ENCODE measurements at regions of chr11 and their contacts with region 1.

Region 1: GRCh38 chr11:129117595-129118350 is 74.4 kb downstream of the ARHGAP32 start:
- DNase-seq: peak; percentile 70 to 83
- H3K4me3 ChIP-seq: no peak overlapping the region
- H3K4me3 Mint-ChIP-seq: no peak overlapping the region
- H3K27ac Mint-ChIP-seq: no peak overlapping the region
- H3K4me1 ChIP-seq: peaks cover 33% of the 10 kb centered on the region
- H3K4me1 Mint-ChIP-seq: peaks cover 22% of the 10 kb centered on the region
- H3K27me3 ChIP-seq: no peaks in the 10 kb centered on the region
- H3K27me3 Mint-ChIP-seq: no peaks in the 10 kb centered on the region
- CTCF ChIP-seq: peak; percentile 97 to 98

Region 2: GRCh38 chr11:128884703-128885338 is 233.0 kb before region 1 on chr11:
- CTCF ChIA-PET with region 1: no interaction called
- POLR2A ChIA-PET with region 1: no interaction called
- intact Hi-C with region 1: loop called (anchors 2 kb)
- DNase-seq: peak; percentile 78 to 91
- H3K4me3 ChIP-seq: no peak overlapping the region
- H3K4me3 Mint-ChIP-seq: no peak overlapping the region
- H3K27ac Mint-ChIP-seq: no peak overlapping the region
- H3K4me1 ChIP-seq: no peaks in the 10 kb centered on the region; the same call in 1 of the 2 replicates
- H3K4me1 Mint-ChIP-seq: no peaks in the 10 kb centered on the region
- H3K27me3 ChIP-seq: no peaks in the 10 kb centered on the region; the same call in none of the 2 replicates
- H3K27me3 Mint-ChIP-seq: peaks cover 33% of the 10 kb centered on the region
- CTCF ChIP-seq: peak; percentile 96 to 97

Region 3: DNA sequence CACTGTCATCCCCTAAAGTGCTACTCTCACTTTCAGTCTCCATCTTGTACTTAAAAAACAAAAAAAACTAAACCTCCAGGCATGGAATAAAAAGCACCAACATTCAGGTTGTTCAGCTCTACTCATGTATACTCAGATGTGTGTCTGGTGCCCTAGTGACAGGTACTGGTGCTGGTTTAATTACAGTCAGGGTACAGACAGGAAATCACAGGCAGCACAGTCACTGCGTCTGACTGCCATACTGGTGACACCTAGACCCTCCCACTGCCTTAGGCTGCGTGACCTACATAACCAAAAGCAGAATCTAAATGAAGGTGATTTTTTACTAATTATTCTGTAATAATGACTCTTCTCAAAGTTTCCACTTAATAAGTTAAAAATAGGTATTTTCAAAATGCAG is 74.4 kb after region 1 on chr11 and contains the start of gene ARHGAP32:
- CTCF ChIA-PET with region 1: no interaction called
- POLR2A ChIA-PET with region 1: no interaction called
- intact Hi-C with region 1: loop called (anchors 5 kb)
- DNase-seq: no peak
- H3K4me3 ChIP-seq: no peak within 1 kb of the TSS
- H3K4me3 Mint-ChIP-seq: no peak within 1 kb of the TSS
- H3K27ac Mint-ChIP-seq: no peak within 1 kb of the TSS
- H3K4me1 ChIP-seq: peaks cover 26% of the 10 kb centered on the region
- H3K4me1 Mint-ChIP-seq: peaks cover 6% of the 10 kb centered on the region
- H3K27me3 ChIP-seq: no peaks in the 10 kb centered on the region
- H3K27me3 Mint-ChIP-seq: no peaks in the 10 kb centered on the region
- CTCF ChIP-seq: no peak
- total RNA-seq, gene ARHGAP32: 54.0 and 56.0 TPM in 2 replicates

Region 4: DNA sequence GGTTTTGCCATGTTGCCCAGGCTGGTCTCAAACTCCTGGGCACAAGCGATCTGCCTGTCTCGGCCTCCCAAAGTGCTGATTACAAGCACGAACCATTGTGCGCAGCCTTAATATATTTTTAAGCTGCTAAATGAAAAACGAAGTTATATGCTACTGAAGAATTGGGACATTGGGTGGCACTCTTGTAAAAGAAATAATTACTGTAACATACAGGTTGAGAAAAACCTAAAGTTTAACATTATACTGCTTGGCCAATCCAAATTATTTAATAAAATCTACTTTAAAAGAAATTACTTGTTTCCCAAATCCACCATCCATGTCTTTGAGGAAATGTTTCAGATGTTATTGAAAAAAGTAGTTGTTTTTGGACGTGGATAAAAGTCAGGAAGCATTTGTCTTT is 112.2 kb after region 1 on chr11:
- CTCF ChIA-PET with region 1: no interaction called
- POLR2A ChIA-PET with region 1: no interaction called
- intact Hi-C with region 1: loop called (anchors 5 kb)
- DNase-seq: no peak
- H3K4me3 ChIP-seq: no peak overlapping the region
- H3K4me3 Mint-ChIP-seq: no peak overlapping the region
- H3K27ac Mint-ChIP-seq: no peak overlapping the region
- H3K4me1 ChIP-seq: peaks cover 3% of the 10 kb centered on the region
- H3K4me1 Mint-ChIP-seq: peaks cover 2% of the 10 kb centered on the region
- H3K27me3 ChIP-seq: no peaks in the 10 kb centered on the region
- H3K27me3 Mint-ChIP-seq: no peaks in the 10 kb centered on the region
- CTCF ChIP-seq: no peak

Region 5: DNA sequence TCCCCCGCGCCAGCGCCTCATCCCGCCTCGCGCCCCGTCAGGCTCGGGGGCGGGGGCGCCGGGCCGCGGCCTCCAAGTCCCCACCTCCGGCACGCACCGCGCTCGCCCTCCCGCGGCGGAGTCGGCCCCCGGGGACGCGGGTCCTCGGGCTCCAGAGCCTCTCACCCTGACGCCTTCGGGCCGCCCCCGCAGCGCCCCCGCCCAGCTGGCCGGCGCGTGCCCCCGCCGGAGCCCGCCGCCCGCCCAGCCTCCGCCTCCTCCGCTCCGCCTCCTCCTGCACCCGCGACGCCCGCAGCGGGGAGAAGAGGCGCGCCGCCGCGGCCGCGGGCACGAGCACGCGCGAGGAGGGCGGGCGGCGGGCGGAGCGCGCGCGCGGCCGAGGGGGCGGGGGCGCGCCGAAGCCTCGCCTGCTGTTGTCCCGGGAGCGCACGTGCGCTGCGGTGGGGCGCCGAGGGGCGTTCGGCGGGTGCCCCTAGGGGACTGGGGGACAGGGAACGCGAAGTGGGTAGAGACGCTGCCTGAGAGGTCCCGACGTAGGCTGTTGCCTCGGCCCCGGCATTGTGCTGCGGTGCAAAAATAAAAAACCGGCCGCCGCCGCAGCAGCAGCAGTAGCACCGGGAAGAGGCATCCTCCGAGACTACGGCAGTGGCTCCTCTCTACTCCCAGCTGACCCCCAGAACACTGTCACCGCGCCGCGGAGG is 161.7 kb after region 1 on chr11:
- CTCF ChIA-PET with region 1: interaction called, 4 read pairs
- POLR2A ChIA-PET with region 1: no interaction called
- intact Hi-C with region 1: loop called (anchors 1 kb)
- DNase-seq: peak; percentile 94 to 98
- H3K4me3 ChIP-seq: peak overlapping the region; percentile 84
- H3K4me3 Mint-ChIP-seq: peak overlapping the region; percentile 90
- H3K27ac Mint-ChIP-seq: peak overlapping the region; percentile 84
- H3K4me1 ChIP-seq: peaks cover 79% of the 10 kb centered on the region
- H3K4me1 Mint-ChIP-seq: peaks cover 60% of the 10 kb centered on the region
- H3K27me3 ChIP-seq: no peaks in the 10 kb centered on the region
- H3K27me3 Mint-ChIP-seq: no peaks in the 10 kb centered on the region
- CTCF ChIP-seq: peak in 1 of 2 experiments; percentile 38

Region 6: DNA sequence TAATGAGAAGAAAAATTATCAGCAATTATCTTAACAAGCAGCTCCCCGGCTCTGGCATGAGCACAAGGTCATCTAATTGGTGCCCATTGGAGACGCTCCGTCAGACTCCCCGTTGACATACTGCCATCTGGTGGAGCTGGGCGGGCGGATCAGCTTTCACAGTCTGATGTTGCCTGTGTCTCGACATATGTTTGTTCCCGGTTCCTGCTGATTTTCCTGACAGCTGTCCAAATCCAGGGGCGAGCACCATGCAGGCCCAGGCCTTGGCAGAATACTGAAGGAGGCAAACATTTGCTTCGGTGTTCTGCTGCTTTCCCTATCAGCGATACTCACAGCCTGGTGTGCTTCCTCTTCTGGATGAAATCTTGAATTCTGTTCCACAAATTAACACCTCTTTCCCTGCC is 214.1 kb after region 1 on chr11:
- CTCF ChIA-PET with region 1: interaction called, 14 read pairs
- POLR2A ChIA-PET with region 1: no interaction called
- intact Hi-C with region 1: loop called (anchors 1 kb)
- DNase-seq: peak; percentile 93 to 95
- H3K4me3 ChIP-seq: no peak overlapping the region
- H3K4me3 Mint-ChIP-seq: no peak overlapping the region
- H3K27ac Mint-ChIP-seq: peak overlapping the region; percentile 6
- H3K4me1 ChIP-seq: 0 out of 2 replicates have a peak, but pooled peaks cover 3% of the 10 kb centered on the region
- H3K4me1 Mint-ChIP-seq: peaks cover 12% of the 10 kb centered on the region
- H3K27me3 ChIP-seq: no peaks in the 10 kb centered on the region
- H3K27me3 Mint-ChIP-seq: no peaks in the 10 kb centered on the region
- CTCF ChIP-seq: peak; percentile 99

Region 7: GRCh38 chr11:129750349-129751292 is 632.8 kb after region 1 on chr11:
- CTCF ChIA-PET with region 1: no interaction called
- POLR2A ChIA-PET with region 1: no interaction called
- intact Hi-C with region 1: loop called (anchors 2 kb)
- DNase-seq: peak; percentile 80 to 93
- H3K4me3 ChIP-seq: peak overlapping the region; percentile 18; the same call in 1 of the 2 replicates
- H3K4me3 Mint-ChIP-seq: peak overlapping the region; percentile 50
- H3K27ac Mint-ChIP-seq: no peak overlapping the region
- H3K4me1 ChIP-seq: peaks cover 5% of the 10 kb centered on the region
- H3K4me1 Mint-ChIP-seq: no peaks in the 10 kb centered on the region
- H3K27me3 ChIP-seq: no peaks in the 10 kb centered on the region
- H3K27me3 Mint-ChIP-seq: no peaks in the 10 kb centered on the region
- CTCF ChIP-seq: peak; percentile 100

Measured in Caco-2 (cell line).